SK-N-SH (cell line): ENCODE measurements at regions of chr2 and their contacts with region 1.

Region 1: GRCh38 chr2:219294356-219295351 is 14.5 kb downstream of the PTPRN start:
- DNase-seq: peak; percentile 100
- H3K4me3 ChIP-seq: peak overlapping the region; percentile 37 to 51; a peak in 3 of 4 replicates
- H3K27ac ChIP-seq: peak overlapping the region in 1 of 2 experiments; percentile 18; a peak in 1 of 4 replicates
- H3K4me1 ChIP-seq: peaks cover under 1 to 8% of the 10 kb centered on the region in 2 experiments; a peak in 1 of 4 replicates
- H3K27me3 ChIP-seq: no peaks in the 10 kb centered on the region
- CTCF ChIP-seq: peak; percentile 84
- EP300 ChIP-seq: no peak
- RAD21 ChIP-seq: peak; percentile 72

Region 2: GRCh38 chr2:219155054-219155644 is 139.5 kb before region 1 on chr2:
- CTCF ChIA-PET with region 1: interaction called, 62 read pairs
- POLR2A ChIA-PET with region 1: no interaction called
- DNase-seq: peak; percentile 73
- H3K4me3 ChIP-seq: no peak overlapping the region
- H3K27ac ChIP-seq: no peak overlapping the region
- H3K4me1 ChIP-seq: peaks cover 0 to 5% of the 10 kb centered on the region in 2 experiments; a peak in 1 of 4 replicates
- H3K27me3 ChIP-seq: no peaks in the 10 kb centered on the region
- CTCF ChIP-seq: peak; percentile 67
- EP300 ChIP-seq: no peak
- RAD21 ChIP-seq: peak; percentile 90

Region 3: GRCh38 chr2:219177552-219178376 is 116.9 kb before region 1 on chr2 and contains the start of gene RETREG2:
- CTCF ChIA-PET with region 1: interaction called, 87 read pairs
- POLR2A ChIA-PET with region 1: interaction called, 4 read pairs
- DNase-seq: peak; percentile 99
- H3K4me3 ChIP-seq: peak within 1 kb of the TSS; percentile 80 to 89
- H3K27ac ChIP-seq: peak within 1 kb of the TSS; percentile 95 to 97
- H3K4me1 ChIP-seq: peaks cover 0 to 17% of the 10 kb centered on the region in 2 experiments; a peak in 2 of 4 replicates
- H3K27me3 ChIP-seq: no peaks in the 10 kb centered on the region
- CTCF ChIP-seq: peak; percentile 39
- EP300 ChIP-seq: 0 out of 4 replicates have a peak, but pooled peaks have one; percentile 12 to 21
- RAD21 ChIP-seq: no peak
- polyA plus RNA-seq, gene RETREG2: 74.6 and 94.8 TPM in 2 replicates

Region 4: GRCh38 chr2:219253753-219254590 is 40.7 kb before region 1 on chr2 and contains the start of gene TUBA4A:
- CTCF ChIA-PET with region 1: interaction called, 44 read pairs
- POLR2A ChIA-PET with region 1: no interaction called
- DNase-seq: peak; percentile 98
- H3K4me3 ChIP-seq: peak within 1 kb of the TSS; percentile 53 to 60
- H3K27ac ChIP-seq: no peak within 1 kb of the TSS
- H3K4me1 ChIP-seq: peaks cover 17 to 21% of the 10 kb centered on the region in 2 experiments; a peak in 3 of 4 replicates
- H3K27me3 ChIP-seq: peaks cover 40% of the 10 kb centered on the region
- CTCF ChIP-seq: no peak
- EP300 ChIP-seq: no peak
- RAD21 ChIP-seq: no peak
- polyA plus RNA-seq, gene TUBA4A: 4.8 and 6.2 TPM in 2 replicates

Region 5: DNA sequence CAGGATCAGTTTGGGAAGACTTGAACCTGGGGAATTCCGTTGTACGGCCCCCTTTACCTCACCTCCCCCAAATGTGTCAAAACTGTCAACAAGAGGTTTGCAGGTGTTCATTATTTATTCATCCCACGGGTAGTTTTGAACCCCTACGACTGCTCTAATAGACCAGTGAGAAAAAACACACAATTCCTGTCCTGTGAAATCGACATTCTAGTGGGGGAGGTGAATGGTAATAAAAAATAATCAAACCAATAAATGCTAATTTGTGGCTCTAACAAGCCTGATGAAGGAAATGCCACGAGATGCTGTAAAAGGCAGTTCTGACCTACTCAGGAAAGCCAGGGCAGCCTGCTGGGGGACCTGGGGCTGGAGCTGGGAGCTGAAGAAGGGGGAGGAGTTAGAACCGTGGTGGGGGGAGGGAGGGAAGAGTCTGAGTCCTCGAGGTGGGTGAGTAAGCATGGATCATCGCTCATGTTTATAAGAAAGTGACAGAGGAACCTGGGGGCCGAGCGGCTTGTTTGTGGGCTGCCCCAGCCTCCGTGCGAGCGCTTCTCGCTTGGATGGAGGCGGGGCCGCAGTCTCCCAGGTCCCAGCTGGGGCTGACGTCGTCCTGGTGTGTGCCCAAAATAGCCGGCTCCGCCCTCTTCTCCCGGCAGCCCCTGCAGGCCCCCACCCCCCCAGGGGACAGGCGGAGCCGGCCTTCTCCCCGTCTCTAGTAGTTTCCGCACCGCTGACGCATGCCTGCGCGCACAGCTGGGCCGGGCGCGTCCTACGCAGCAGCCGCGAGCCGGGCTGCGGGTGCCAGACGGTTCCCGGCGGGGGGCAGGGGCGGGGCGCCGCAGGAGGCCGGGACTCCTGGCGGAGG is 15.8 kb before region 1 on chr2 and contains the start of gene DNAJB2:
- CTCF ChIA-PET with region 1: interaction called, 312 read pairs
- POLR2A ChIA-PET with region 1: interaction called, 7 read pairs
- DNase-seq: peak; percentile 99
- H3K4me3 ChIP-seq: peak within 1 kb of the TSS; percentile 69 to 82
- H3K27ac ChIP-seq: peak within 1 kb of the TSS; percentile 88 to 91
- H3K4me1 ChIP-seq: peaks cover 24 to 26% of the 10 kb centered on the region in 2 experiments
- H3K27me3 ChIP-seq: no peaks in the 10 kb centered on the region
- CTCF ChIP-seq: no peak
- EP300 ChIP-seq: peak; percentile 57 to 64; a peak in 3 of 4 replicates
- RAD21 ChIP-seq: no peak
- polyA plus RNA-seq, gene DNAJB2: 37.2 and 39.9 TPM in 2 replicates

Region 6: GRCh38 chr2:219344751-219345430 is 50.2 kb after region 1 on chr2:
- CTCF ChIA-PET with region 1: interaction called, 17 read pairs
- POLR2A ChIA-PET with region 1: interaction called, 3 read pairs
- DNase-seq: no peak
- H3K4me3 ChIP-seq: no peak overlapping the region
- H3K27ac ChIP-seq: no peak overlapping the region
- H3K4me1 ChIP-seq: peaks cover 0 to 4% of the 10 kb centered on the region in 2 experiments; a peak in 1 of 4 replicates
- H3K27me3 ChIP-seq: no peaks in the 10 kb centered on the region
- CTCF ChIP-seq: no peak
- EP300 ChIP-seq: no peak
- RAD21 ChIP-seq: no peak

Region 7: DNA sequence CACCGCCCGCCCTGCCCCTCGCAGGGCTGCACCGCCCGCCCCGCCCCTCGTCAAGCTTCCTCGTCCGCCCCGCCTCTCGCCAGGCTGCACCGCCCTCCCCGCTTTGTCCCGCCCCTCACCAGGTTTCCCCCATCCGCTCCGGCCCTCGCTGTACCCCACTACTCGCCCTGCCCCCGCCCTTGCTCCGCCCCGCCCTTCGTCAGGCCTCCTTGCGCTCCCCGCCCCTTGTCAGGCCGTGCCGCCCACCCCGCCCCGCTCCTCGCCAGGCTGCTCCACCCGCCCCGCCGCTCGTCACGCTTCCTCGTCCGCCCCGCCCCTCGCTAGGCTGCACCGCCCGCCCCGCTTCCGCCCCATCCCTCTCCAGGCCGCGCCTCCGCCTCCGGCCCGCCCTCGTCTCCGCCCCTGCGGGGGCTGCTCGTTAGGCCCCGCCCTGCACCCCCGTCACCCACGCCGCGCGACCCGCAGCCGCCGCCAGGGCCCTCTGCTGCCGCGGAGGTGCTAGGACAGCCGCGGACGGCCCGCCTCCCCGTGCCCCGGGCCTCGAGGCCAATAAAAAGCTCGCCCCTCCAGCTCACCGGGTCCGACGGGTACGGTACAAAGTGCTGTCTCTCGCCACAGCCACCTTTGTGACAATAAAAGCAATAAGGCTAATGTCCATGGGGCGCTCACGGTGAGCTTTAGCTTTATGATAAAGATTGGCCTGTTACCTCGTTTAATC is 93.6 kb after region 1 on chr2:
- CTCF ChIA-PET with region 1: interaction called, 10 read pairs
- POLR2A ChIA-PET with region 1: no interaction called
- DNase-seq: peak; percentile 99
- H3K4me3 ChIP-seq: peak overlapping the region in 1 of 2 experiments; percentile 43; a peak in 2 of 4 replicates
- H3K27ac ChIP-seq: peak overlapping the region; percentile 43 to 75; a peak in 3 of 4 replicates
- H3K4me1 ChIP-seq: peaks cover 3 to 16% of the 10 kb centered on the region in 2 experiments; a peak in 1 of 4 replicates
- H3K27me3 ChIP-seq: no peaks in the 10 kb centered on the region
- CTCF ChIP-seq: peak; percentile 64
- EP300 ChIP-seq: no peak
- RAD21 ChIP-seq: no peak